ENCODE measurements at regions of chr3 and their contacts with region 1.

Region 1: DNA sequence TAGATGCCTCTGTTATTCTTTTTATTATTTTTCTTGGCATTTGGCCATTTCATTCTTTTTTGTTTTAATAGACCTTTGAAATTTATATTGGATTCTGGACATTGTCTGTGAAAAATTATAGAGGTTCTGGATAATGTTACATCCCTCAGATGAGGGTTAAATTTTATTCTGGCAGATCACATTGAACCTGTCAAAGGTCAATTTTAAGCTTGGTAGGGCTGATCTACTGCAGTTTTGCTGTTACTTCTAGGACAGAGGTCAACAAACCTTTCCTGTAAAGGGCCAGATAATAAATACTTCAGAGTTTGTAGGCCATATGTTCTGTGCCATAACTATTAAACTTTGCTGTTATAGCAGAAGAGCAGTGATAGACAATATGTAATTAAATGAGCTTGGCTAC is 318.9 kb upstream of the DPPA4 start:
- DNase-seq: no peak
- H3K4me3 ChIP-seq: no peak overlapping the region
- CTCF ChIP-seq: no peak
- POLR2A ChIP-seq: no peak

Region 2: DNA sequence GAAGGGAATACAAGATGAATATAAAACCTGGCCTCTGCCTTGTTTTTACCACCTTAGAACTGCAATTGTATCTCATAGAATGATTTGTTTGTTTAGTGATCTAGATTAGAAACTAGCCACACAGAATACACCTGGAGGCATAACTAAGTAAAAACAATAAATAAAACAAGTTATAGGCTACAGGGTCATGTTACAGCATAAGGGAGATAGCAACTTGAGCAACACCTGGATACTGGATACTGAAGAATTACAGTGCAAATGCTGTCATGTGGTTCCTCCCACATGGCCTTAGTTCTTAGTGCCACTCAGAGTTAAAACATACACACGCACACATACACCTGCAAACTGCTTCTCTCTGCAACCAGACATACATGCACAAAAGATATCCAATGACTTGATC is 244.5 kb after region 1 on chr3:
- intact Hi-C with region 1: no loop called
- DNase-seq: no peak
- H3K4me3 ChIP-seq: no peak overlapping the region
- CTCF ChIP-seq: no peak
- POLR2A ChIP-seq: no peak

Region 3: DNA sequence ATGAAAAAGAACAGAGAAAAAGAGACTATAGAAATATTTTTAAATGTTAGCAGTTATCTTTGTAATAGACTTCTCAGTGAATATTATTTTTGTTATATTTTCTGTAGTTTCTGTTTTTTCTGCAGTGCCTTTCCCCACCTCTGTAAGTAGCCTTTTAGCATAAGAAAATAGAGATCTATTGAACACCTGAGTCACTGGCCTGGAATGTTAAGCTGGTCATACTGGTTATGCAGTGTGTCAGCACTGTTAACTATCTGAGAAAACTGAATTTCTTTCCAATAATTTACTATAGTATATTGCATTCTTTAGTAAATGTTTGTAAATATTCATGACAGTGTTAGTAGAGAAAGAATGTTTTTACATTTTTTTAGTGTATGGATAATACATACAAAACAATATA is 1495.2 kb after region 1 on chr3:
- intact Hi-C with region 1: loop called (anchors 5 kb)
- DNase-seq: no peak
- H3K4me3 ChIP-seq: no peak overlapping the region
- CTCF ChIP-seq: no peak
- POLR2A ChIP-seq: no peak

Measured in lower leg skin (tissue), 4 donors.